BJ (cell line): ENCODE measurements at regions of chr2 and their contacts with region 1.

Region 1: DNA sequence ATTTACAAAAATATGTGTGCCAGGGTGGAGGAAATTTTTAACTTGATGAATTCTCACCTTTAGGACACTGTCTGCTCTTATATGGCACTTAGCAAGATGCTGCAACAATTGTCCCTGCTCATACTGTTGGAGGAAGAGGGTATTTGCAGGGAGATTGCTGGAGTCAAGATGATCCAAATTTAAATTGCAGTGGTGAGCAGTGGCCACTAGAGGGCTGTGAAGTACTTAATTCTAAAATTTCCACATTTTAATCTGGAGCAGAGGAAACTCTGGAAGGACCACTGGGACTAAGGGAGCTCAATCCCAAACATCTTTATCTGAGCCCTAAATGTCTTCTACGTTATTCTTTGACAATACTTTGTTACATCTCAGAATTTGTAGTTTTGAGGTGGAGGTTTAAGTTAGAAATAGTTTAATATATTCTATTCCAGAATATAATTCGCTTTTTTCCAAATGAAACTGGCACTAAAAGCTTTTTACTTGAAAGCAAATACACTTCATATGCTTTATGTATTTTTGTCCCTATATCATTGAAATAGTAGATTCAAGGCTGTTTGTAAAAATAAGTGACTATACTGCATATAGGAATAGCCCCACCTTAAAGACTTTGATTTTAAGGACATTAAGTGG is 33.0 kb upstream of the PTH2R start:
- DNase-seq: no peak
- H3K4me3 ChIP-seq: no peak overlapping the region
- H3K27me3 ChIP-seq: peaks cover 4% of the 10 kb centered on the region; the same call in 1 of the 2 replicates
- CTCF ChIP-seq: peak; percentile 84

Region 2: GRCh38 chr2:208386541-208386940 is 13.0 kb after region 1 on chr2:
- CTCF ChIA-PET with region 1: interaction called, 16 read pairs
- POLR2A ChIA-PET with region 1: no interaction called
- DNase-seq: no peak
- H3K4me3 ChIP-seq: no peak overlapping the region
- H3K27me3 ChIP-seq: peaks cover 1% of the 10 kb centered on the region
- CTCF ChIP-seq: no peak